ENCODE measurements at regions of chr9 and their contacts with region 1.

Region 1: GRCh38 chr9:104747558-104748358 is at the start of gene NIPSNAP3A:
- DNase-seq: peak; percentile 91
- H3K4me3 ChIP-seq: peak within 1 kb of the TSS; percentile 59 to 87 (median 73)
- H3K27ac ChIP-seq: peak within 1 kb of the TSS; percentile 87 to 92 (median 90)
- H3K4me1 ChIP-seq: peaks cover 0 to 18% (median 10%) of the 10 kb centered on the region in 4 donors
- H3K27me3 ChIP-seq: no peaks in the 10 kb centered on the region
- CTCF ChIP-seq: no peak
- EP300 ChIP-seq: no peak
- POLR2A ChIP-seq: peak; percentile 14 to 30
- total RNA-seq, gene NIPSNAP3A: 18.3 to 23.8 (median 22.0) TPM

Region 2: GRCh38 chr9:104027295-104027694 is 720.5 kb before region 1 on chr9:
- intact Hi-C with region 1: loop called (anchors 2 kb)
- DNase-seq: no peak
- H3K4me3 ChIP-seq: no peak overlapping the region
- H3K27ac ChIP-seq: no peak overlapping the region
- H3K4me1 ChIP-seq: peaks cover 0 to 4% (median 0%) of the 10 kb centered on the region in 4 donors
- H3K27me3 ChIP-seq: no peaks in the 10 kb centered on the region
- CTCF ChIP-seq: no peak
- EP300 ChIP-seq: no peak
- POLR2A ChIP-seq: no peak

Region 3: GRCh38 chr9:104093647-104094533 is 653.9 kb before region 1 on chr9 and contains the start of gene SMC2:
- intact Hi-C with region 1: loop called (anchors 5 kb)
- DNase-seq: peak; percentile 92
- H3K4me3 ChIP-seq: peak within 1 kb of the TSS; percentile 49 to 76 (median 58)
- H3K27ac ChIP-seq: peak within 1 kb of the TSS; percentile 92 to 95 (median 93)
- H3K4me1 ChIP-seq: peaks cover 0 to 43% (median 27%) of the 10 kb centered on the region in 4 donors
- H3K27me3 ChIP-seq: no peaks in the 10 kb centered on the region
- CTCF ChIP-seq: no peak
- EP300 ChIP-seq: no peak
- POLR2A ChIP-seq: peak; percentile 73 to 88
- total RNA-seq, gene SMC2: 4.1 to 8.6 (median 8.1) TPM

Region 4: DNA sequence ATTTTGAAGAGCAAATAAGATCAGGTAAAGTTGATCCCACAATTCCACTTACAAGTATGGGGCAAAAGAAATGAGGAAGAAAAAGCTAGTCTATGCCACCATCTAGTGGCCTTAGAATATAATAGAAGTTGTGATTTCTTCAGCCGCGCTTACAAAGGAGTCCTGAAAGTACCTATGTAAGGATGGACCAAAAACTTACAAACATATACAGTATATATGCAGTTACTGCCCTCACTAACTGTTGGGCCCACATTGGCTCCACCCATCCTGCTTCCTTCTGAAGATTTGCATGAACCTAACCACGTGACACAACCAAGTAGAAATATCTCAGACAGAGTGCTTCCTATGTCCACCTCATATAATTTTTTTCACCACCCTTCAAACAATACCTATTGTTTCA is 65.1 kb before region 1 on chr9:
- intact Hi-C with region 1: no loop called
- DNase-seq: no peak
- H3K4me3 ChIP-seq: no peak overlapping the region
- H3K27ac ChIP-seq: no peak overlapping the region
- H3K4me1 ChIP-seq: no peaks in the 10 kb centered on the region
- H3K27me3 ChIP-seq: no peaks in the 10 kb centered on the region
- CTCF ChIP-seq: no peak
- EP300 ChIP-seq: no peak
- POLR2A ChIP-seq: no peak

Region 5: DNA sequence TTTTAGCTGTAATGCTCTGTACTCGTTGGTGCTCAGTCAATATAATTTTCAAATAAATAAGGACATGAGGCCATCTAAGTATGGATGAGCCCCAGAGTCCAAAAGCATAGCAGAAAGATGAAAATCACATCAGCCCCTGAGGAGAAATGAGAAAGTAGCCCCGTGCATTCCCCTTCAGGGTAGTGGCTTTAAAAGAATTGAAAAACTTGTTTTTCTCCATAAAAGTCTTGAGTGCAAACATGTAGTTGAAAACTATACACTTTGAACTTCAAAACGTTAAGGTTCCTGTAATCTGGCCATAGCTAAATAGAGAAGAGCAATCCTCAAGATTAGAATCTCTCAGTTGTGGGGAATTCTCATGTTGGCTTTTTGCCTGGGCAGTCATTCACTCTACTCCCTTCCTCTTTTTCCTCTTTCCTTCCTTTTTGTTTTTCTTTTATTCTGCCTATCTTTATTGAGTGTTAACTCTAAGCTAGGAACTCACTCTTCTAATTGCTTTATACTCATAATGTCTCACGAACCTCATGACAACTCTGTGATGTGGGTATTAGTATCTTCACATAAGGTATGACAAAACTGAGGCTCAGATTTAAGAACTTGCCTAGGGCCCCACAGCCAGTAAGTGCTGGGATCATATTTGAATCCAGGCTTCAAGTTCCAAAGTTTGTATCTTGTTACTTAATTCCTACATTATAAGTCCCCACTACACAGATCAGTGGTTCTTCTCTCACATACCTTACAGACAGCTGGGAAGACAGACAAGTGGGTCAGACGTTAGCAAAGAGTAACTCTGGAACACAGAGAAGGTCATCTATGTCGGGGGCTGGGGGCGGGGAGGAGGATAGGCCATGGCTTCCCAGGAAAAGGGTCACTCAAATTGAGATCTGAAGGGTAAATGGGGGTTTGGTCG is 226.6 kb after region 1 on chr9:
- intact Hi-C with region 1: no loop called
- DNase-seq: no peak
- H3K4me3 ChIP-seq: no peak overlapping the region
- H3K27ac ChIP-seq: no peak overlapping the region
- H3K4me1 ChIP-seq: peaks cover 0 to 35% (median 25%) of the 10 kb centered on the region in 4 donors
- H3K27me3 ChIP-seq: no peaks in the 10 kb centered on the region
- CTCF ChIP-seq: no peak
- EP300 ChIP-seq: no peak
- POLR2A ChIP-seq: no peak

Region 6: DNA sequence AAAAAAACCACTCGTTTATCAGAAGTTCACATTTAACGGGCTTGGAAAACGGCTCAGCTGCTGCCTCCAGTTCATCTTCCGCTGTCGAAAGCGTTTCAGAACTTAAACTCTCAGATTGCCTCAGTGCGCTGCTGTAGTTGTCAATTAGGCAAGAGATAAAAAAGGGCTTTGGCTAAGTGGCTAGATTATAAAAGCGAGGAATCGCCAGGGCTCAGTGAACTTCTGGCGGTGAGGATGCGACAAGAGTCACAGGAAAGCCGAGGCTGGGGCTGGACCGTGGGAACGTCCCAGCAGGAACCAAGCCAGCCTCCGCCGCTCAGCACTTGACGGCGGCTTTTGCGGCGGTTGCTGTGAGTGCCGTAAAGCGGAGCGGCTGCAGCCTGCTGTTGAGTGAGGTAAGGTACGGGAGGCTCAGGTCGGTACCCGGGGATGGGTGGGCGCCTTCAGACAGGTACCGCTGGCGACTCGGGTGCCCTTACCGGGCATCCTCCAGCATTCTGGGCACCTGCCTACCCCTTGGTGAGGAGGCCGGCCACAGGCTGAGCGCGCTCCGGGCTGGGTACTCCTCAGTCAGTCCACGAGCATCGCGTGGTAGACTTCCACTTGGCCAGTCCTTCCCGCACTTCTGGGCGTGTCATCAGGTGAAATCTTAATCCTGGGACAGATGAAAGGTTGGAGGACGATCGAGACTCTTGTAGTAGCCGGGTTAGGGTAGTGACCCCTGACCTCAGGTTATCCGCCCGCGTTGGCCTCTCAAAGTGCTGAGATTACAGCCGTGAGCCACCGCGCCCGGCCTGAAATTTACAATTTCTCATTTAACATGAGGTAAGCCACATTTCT is 810.2 kb after region 1 on chr9 and contains the start of gene FKTN:
- intact Hi-C with region 1: loop called (anchors 10 kb)
- DNase-seq: peak; percentile 92
- H3K4me3 ChIP-seq: peak within 1 kb of the TSS; percentile 74 to 89 (median 82)
- H3K27ac ChIP-seq: peak within 1 kb of the TSS; percentile 55 to 77 (median 70)
- H3K4me1 ChIP-seq: peaks cover 0 to 8% (median 4%) of the 10 kb centered on the region in 4 donors
- H3K27me3 ChIP-seq: no peaks in the 10 kb centered on the region
- CTCF ChIP-seq: no peak
- EP300 ChIP-seq: no peak
- POLR2A ChIP-seq: no peak
- total RNA-seq, gene FKTN: 8.0 to 13.9 (median 10.6) TPM